ENCODE measurements at regions of chr22 and their contacts with region 1.

Region 1: GRCh38 chr22:35921777-35922176 is 106.8 kb downstream of the RBFOX2 start:
- DNase-seq: no peak

Region 2: DNA sequence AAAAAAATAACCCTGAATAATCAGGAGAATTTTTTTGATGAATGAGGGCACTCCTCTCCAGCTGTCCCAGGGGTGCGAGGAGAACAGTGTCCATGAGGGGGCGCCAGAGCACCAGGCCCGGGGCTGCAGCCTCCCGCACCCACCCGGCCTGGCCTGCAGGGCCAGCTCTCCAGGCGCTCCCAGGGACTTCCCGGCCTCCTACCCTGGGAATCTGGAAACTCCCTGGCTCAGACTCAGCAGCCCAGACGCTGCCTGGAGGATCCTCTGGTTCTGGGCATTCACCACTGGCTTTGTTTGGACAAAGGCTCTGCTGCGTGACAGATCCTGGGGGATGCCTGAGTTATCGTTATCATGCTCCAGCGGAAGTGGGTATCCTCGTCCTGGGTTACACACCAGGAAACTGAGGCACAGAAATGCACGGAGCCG is 490.9 kb before region 1 on chr22:
- intact Hi-C with region 1: loop called (anchors 5 kb)
- DNase-seq: peak; percentile 94

Region 3: DNA sequence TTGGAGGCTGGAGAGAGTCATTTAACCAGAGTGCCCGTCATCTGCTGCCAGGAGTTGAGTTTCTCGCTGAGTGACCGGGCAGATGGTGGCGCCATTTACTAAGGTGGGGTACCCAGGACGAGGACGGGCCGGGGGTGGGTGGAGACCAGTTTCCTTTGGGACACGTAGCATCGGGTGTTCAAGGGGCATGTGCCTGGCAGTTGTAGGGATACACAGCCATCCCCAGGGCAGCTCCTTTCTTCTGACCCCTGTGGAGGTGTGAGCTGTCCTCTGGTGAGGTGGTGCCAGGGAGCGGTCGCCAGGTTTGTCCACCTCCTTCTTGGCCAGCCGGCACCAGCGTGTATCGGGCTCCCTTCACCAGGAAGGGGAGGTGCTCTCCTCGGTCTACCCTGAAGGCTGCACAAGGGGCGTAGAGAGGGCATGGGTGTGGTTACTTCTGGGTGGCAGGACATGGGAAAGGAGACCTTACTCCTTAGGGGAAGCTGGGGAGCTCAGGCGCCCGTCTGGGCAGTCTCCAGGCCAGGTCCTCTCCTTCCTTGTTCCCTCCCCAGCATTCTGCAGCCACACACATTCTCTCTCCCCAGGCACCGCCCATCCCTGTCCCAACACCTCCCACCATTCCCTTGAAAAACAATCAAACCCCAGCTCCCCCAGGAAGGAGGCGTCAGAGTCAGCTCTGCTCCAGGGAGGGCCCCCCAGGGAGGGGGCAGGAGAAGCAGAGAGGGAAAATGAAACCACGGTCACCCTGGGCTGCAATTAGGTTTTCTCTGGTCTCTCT is 294.3 kb before region 1 on chr22:
- intact Hi-C with region 1: loop called (anchors 2 kb)
- DNase-seq: peak; percentile 90

Region 4: GRCh38 chr22:35684270-35684700 is 237.5 kb before region 1 on chr22:
- intact Hi-C with region 1: loop called (anchors 2 kb)
- DNase-seq: no peak

Region 5: GRCh38 chr22:35739076-35739930 is 182.5 kb before region 1 on chr22:
- intact Hi-C with region 1: loop called (anchors 5 kb)
- DNase-seq: no peak

Measured in cardiac septum (tissue), 1 donor.